Posterior vena cava (tissue), 2 donors: ENCODE measurements at regions of chr19 and their contacts with region 1.

Region 1: DNA sequence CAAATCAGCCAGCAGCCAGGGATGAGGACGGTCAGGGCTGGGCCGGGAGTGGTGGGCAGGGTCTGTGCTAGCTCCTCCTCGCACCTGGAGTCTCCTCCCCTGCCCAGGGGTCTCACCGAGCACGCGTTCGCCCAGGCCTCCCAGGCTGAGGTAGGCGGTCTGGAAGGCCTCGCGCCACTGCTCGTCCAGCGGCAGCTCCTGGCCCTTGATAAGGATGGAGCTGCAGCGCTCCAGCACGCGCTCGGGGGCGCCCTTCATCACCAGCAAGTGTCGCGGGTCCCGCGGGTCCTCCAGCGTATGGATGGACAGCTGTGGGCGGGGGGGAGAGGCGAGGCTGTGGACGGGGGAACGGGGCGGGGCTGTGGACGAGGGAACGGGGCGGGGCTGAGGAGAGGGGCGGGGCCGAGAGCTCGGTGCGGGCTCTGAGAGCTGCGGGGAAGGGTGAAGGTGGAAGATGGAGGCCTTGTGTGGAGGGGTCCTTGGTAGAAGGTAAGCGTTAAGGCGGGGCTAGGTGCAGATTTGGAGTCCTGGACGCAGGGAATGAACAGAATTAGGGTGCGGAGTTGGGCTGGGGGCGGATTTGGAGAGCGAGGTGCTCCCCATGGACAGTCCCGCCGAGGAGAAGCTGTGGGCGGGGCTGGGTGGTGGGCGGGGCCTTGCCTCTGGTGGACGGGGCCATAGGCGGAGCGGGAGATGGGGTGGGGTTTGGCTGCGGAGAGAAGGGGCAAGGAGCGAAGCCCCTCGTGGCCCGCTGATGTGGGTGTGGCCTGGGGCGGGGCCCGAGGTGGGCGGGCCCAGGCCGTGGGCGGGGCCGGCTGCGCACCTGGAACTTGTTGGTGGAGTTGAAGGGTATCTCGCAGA is 5.7 kb downstream of the ATP4A start:
- DNase-seq: peak; percentile 76

Region 2: DNA sequence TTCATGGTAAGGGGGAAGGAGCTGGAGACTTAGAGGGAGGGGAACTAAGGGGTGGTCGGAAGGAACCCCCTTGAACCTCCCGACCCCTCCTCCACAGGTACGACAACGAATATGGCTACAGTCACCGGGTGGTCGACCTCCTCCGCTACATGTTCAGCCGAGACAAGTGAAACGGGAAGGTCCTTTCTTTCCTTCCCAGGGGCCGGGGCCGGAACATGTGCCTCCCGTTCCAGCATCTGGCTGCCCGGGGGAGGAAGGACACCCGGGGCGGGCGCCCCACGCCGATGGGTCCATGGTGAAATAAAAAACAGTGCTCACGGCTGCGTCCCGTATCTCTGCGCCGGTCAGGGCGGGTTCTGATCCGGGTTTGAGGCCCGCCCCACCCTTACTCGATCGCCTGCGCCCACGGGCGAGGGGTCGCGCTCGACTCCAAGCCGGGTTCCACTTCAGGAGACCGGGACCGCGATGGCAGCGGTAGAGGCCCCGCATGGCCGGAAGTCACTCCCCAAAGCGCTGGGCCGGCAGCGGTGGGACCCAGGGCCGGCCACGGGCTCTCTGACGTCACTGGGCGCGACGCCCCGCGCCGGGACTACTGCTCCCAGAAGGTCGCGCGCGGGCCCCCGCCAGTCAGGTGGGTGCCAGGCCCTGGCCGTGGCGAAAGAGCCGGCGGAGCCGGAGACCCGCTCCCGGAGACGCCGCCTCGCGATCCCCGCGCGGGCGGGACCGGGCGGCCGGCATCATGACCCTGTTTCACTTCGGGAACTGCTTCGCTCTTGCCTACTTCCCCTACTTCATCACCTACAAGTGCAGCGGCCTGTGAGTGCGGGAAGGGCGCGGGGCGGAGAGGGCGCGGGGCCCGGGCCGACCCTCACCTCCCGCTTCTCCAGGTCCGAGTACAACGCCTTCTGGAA is 12.5 kb before region 1 on chr19 and contains the start of gene TMEM147:
- intact Hi-C with region 1: no loop called
- DNase-seq: peak; percentile 98
- total RNA-seq, gene TMEM147: 52.4 to 61.1 TPM

Region 3: DNA sequence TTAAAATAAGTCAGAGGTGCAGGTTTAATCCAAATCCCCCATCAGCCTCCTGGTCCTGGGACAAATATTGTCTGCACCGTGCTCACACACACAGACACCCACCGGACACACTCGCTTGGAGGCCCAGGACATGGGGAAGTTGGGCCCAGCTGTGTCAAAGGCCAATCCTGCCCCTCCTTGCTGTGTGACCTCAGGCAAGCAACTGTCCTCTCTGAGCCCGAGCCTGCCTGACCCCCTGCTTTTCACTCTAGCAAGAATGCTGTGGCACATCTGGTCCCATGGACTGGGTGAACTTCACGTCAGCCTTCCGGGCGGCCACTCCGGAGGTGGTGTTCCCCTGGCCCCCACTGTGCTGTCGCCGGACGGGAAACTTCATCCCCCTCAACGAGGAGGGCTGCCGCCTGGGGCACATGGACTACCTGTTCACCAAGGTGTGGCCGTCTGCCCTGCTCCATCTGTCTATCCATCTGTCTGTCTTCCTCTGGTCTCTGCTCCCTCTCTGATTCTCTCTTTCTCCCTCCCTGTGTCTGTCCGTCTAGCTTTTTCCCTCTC is 117.9 kb after region 1 on chr19:
- intact Hi-C with region 1: loop called in 1 of 2 experiments (anchors 5 kb)
- DNase-seq: no peak